ENCODE measurements at regions of chr12 and their contacts with region 1.

Region 1: DNA sequence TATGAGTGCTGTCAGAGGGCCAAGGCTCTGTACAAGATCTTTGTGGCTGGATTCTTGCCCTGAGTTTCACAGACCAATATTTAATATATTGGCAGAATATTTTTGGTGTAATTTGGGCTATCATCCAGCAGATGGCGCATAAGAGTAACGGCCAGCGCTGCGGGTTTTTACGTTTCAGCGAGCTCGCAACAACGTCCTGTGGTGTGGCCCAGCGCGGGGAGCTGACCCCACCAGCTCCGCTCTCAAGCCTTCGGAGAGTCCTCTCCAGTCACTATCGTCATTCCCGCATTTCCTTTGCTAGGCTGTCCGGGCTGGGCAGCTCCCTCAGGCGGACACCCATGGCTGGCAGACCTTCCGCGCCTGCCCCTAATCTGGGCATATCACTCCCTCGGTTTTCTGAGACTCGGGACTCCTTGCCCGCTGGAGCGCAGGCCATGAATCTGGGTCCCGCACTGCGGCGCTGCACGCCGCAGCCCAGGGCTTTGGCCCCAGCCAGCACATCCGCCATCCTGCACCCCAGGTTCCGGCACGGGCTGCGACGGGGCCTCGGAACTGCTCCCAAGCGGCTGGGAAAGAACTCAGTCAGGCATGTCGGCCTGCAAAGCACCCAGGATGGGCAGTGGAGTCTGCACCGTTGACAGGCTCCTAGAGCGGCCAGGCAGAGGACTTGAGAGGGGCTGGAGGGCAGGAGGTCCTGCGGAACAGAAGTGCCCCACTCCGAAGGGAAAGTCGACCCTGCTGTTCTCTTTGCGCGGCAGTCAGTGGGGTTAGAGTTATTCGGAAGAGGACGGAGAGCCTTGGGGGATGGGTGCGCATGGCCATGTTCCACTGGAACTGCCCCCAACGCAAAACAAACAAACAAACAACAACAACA is 18.4 kb downstream of the OLR1 start:
- DNase-seq: peak; percentile 57 to 65 (median 63)
- H3K4me3 ChIP-seq: peak overlapping the region; percentile 84 to 92
- H3K4me3 Mint-ChIP-seq: peak overlapping the region; percentile 88 to 96 (median 91)
- H3K27ac ChIP-seq: peak overlapping the region; percentile 9
- H3K27ac Mint-ChIP-seq: peak overlapping the region; percentile 25 to 88 (median 78)
- H3K4me1 ChIP-seq: peaks cover 14% of the 10 kb centered on the region
- H3K4me1 Mint-ChIP-seq: peaks cover 6 to 14% (median 11%) of the 10 kb centered on the region in 4 donors
- H3K27me3 ChIP-seq: no peaks in the 10 kb centered on the region
- H3K27me3 Mint-ChIP-seq: peaks cover 7 to 11% of the 10 kb centered on the region in 2 donors

Region 2: GRCh38 chr12:10140001-10140400 is 13.5 kb before region 1 on chr12:
- CTCF ChIA-PET with region 1: interaction called, 17 read pairs
- POLR2A ChIA-PET with region 1: no interaction called
- intact Hi-C with region 1: no loop called
- DNase-seq: peak; percentile 35 to 53 (median 39)
- H3K4me3 ChIP-seq: no peak overlapping the region
- H3K4me3 Mint-ChIP-seq: no peak overlapping the region
- H3K27ac ChIP-seq: no peak overlapping the region
- H3K27ac Mint-ChIP-seq: no peak overlapping the region
- H3K4me1 ChIP-seq: no peaks in the 10 kb centered on the region
- H3K4me1 Mint-ChIP-seq: no peaks in the 10 kb centered on the region
- H3K27me3 ChIP-seq: no peaks in the 10 kb centered on the region
- H3K27me3 Mint-ChIP-seq: peaks cover 4 to 9% of the 10 kb centered on the region in 2 donors

Region 3: DNA sequence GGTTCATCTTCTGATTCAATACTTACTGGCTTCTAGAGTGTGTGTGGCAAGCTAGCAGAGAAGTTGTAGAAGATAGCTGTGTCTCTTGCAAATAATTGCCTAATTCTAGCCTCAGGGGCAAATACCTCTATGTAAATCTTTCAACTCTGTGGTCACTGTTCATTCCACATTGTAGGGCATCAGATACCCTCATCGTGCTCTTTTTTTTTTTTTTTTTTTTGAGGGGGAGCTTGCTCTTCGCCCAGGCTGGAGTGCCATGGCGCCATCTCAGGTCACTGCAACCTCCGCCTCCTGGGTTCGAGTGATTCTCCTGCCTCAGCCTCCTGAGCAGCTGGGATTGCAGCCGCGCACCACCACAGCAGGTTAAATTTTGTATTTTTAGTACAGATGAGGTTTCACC is 16.8 kb after region 1 on chr12:
- CTCF ChIA-PET with region 1: interaction called, 12 read pairs
- POLR2A ChIA-PET with region 1: no interaction called
- intact Hi-C with region 1: no loop called
- DNase-seq: no peak
- H3K4me3 ChIP-seq: no peak overlapping the region
- H3K4me3 Mint-ChIP-seq: no peak overlapping the region
- H3K27ac ChIP-seq: no peak overlapping the region
- H3K27ac Mint-ChIP-seq: no peak overlapping the region
- H3K4me1 ChIP-seq: no peaks in the 10 kb centered on the region
- H3K4me1 Mint-ChIP-seq: no peaks in the 10 kb centered on the region
- H3K27me3 ChIP-seq: no peaks in the 10 kb centered on the region
- H3K27me3 Mint-ChIP-seq: peaks cover 8 to 11% of the 10 kb centered on the region in 2 donors

Region 4: GRCh38 chr12:10190558-10191388 is 37.3 kb after region 1 on chr12:
- CTCF ChIA-PET with region 1: interaction called, 53 read pairs
- POLR2A ChIA-PET with region 1: no interaction called
- intact Hi-C with region 1: loop called (anchors 1 kb)
- DNase-seq: peak; percentile 41 to 54 (median 49)
- H3K4me3 ChIP-seq: no peak overlapping the region
- H3K4me3 Mint-ChIP-seq: no peak overlapping the region
- H3K27ac ChIP-seq: no peak overlapping the region
- H3K27ac Mint-ChIP-seq: no peak overlapping the region
- H3K4me1 ChIP-seq: no peaks in the 10 kb centered on the region
- H3K4me1 Mint-ChIP-seq: peaks cover 3 to 5% (median 4%) of the 10 kb centered on the region in 4 donors
- H3K27me3 ChIP-seq: no peaks in the 10 kb centered on the region
- H3K27me3 Mint-ChIP-seq: peaks cover 10 to 17% of the 10 kb centered on the region in 2 donors

Region 5: DNA sequence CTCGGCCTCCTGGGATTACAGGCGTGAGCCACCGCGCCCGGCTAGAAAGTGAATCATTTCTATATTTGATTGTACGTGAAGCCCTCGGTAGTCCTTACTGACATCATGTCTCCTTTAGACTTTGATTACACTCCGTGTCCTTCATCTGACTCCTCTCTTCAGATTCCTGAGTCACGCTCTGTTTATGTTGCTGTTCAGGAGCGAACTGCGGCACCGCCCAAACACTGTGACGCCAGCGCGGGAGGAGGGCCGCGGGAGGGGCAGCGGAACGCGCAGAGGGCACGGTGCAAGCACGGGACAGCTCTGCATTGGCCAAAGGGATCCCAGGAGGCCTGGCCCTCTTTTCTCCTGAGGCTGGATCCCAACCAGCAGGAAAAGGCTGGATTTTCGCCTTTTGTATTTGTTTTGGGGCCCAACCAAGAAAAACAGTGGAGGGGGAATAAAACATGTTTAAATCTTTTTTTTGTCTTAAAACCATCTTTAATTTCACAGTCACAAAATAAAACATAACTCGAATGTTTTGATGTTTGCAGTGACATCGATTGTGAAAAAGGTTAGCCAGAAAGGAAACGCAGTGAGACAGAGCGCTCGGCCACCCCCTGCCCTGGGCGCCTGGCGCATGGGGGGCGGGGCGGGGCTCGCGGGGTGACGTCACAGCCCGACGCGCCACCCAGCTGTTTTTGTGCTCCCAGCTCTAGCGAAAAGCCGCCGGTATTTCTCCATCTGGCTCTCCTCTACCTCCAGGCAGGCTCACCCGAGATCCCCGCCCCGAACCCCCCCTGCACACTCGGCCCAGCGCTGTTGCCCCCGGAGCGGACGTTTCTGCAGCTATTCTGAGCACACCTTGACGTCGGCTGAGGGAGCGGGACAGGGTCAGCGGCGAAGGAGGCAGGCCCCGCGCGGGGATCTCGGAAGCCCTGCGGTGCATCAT is 59.0 kb after region 1 on chr12 and contains the start of gene GABARAPL1:
- CTCF ChIA-PET with region 1: interaction called, 6 read pairs
- POLR2A ChIA-PET with region 1: interaction called, 3 read pairs
- intact Hi-C with region 1: loop called (anchors 2 kb)
- DNase-seq: peak; percentile 84 to 94 (median 88)
- H3K4me3 ChIP-seq: peak within 1 kb of the TSS; percentile 57 to 69
- H3K4me3 Mint-ChIP-seq: peak within 1 kb of the TSS; percentile 88 to 98 (median 94)
- H3K27ac ChIP-seq: peak within 1 kb of the TSS; percentile 81
- H3K27ac Mint-ChIP-seq: peak within 1 kb of the TSS; percentile 92 to 99 (median 96)
- H3K4me1 ChIP-seq: peaks cover 32% of the 10 kb centered on the region
- H3K4me1 Mint-ChIP-seq: peaks cover 19 to 44% (median 25%) of the 10 kb centered on the region in 4 donors
- H3K27me3 ChIP-seq: no peaks in the 10 kb centered on the region
- H3K27me3 Mint-ChIP-seq: no peaks in the 10 kb centered on the region
- total RNA-seq, gene GABARAPL1: 35.3 to 36.3 TPM

Region 6: DNA sequence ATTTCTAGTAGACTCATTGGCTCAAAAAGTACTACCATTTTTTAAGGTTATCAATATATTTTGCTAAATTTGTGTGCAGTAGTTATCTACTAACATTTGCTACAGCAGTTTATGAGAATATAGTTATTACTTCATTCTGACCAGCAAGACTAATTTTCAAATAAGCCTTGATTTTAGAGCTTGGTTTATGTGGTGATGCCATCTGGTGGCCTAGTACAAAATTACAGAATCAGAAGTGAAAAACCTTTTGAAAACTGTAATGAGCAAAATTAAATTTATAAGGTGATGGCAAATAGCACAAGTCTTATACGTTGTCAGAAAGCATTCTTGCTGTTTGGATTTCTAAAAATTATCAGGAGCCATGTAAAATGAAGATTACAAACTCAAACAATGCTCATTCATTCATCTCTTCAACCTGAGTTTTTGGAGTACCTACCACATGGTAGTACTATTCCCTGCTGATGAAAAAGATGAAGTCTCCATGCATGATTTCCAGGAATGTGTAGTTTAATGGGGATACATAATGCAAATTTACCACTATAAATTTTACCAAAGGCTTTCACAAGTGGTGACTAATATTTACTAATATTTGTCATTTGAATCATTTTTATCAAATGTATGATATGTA is 408.9 kb after region 1 on chr12:
- CTCF ChIA-PET with region 1: interaction called, 3 read pairs
- POLR2A ChIA-PET with region 1: interaction called, 3 read pairs
- intact Hi-C with region 1: loop called (anchors 1 kb)
- DNase-seq: peak in 4 of 5 donors; percentile 31 to 45 (median 38)
- H3K4me3 ChIP-seq: no peak overlapping the region
- H3K4me3 Mint-ChIP-seq: no peak overlapping the region
- H3K27ac ChIP-seq: no peak overlapping the region
- H3K27ac Mint-ChIP-seq: no peak overlapping the region
- H3K4me1 ChIP-seq: no peaks in the 10 kb centered on the region
- H3K4me1 Mint-ChIP-seq: no peaks in the 10 kb centered on the region
- H3K27me3 ChIP-seq: no peaks in the 10 kb centered on the region
- H3K27me3 Mint-ChIP-seq: peaks cover 11 to 24% of the 10 kb centered on the region in 2 donors

Region 7: DNA sequence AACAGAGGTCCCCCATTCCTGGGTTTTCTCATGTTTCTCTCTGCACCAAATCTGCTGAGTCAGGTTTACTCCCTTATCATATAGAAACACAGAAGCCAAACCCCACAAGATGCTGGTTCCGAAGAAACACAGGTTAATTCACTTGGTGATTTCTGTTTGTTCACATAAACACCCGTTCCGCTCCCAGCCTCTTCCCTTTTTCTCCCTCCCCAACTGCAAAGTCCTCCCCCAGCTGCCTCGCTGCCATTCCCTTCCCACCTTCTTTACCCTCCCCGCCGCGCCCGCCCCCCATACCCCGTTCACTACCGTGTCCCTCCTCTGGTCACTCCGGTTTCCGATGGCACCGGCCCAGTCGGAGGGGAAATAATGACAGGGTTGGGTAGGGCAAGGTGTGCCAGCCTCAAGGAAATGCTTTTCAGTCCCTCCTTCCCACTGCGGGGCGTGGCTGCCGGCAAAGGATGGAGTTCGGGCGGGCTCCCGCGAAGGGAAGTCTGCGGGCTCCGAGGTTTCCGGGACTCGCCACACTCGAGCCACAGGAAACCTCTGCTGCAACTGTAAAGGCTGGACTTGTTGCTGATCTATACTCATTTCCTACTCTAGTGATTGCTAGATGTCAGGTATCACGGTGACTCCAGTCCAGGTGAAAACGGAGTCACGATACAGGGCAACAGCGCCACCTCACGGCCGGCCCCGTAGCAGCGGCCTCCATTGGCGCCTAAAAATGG is 520.3 kb after region 1 on chr12 and contains the start of gene STYK1:
- CTCF ChIA-PET with region 1: no interaction called
- POLR2A ChIA-PET with region 1: no interaction called
- intact Hi-C with region 1: loop called (anchors 5 kb)
- DNase-seq: peak; percentile 56 to 75 (median 60)
- H3K4me3 ChIP-seq: peak within 1 kb of the TSS in 1 of 2 donors; percentile 27
- H3K4me3 Mint-ChIP-seq: peak within 1 kb of the TSS; percentile 78 to 91 (median 85)
- H3K27ac ChIP-seq: no peak within 1 kb of the TSS
- H3K27ac Mint-ChIP-seq: peak within 1 kb of the TSS; percentile 15 to 85 (median 58)
- H3K4me1 ChIP-seq: peaks cover 29% of the 10 kb centered on the region
- H3K4me1 Mint-ChIP-seq: peaks cover 20 to 41% (median 28%) of the 10 kb centered on the region in 4 donors
- H3K27me3 ChIP-seq: no peaks in the 10 kb centered on the region
- H3K27me3 Mint-ChIP-seq: peaks cover 17% of the 10 kb centered on the region in 2 donors
- total RNA-seq, gene STYK1: not detected

Measured in CD4-positive, alpha-beta memory T cell (primary cell).